ENCODE measurements at regions of chr6 and their contacts with region 1.

Region 1: GRCh38 chr6:53171605-53172446 is 23.2 kb upstream of the GCM1 start:
- DNase-seq: peak; percentile 83 to 94 (median 87)
- ATAC-seq: peak; percentile 64 to 97 (median 94)
- H3K4me3 ChIP-seq: no peak overlapping the region
- H3K27ac ChIP-seq: no peak overlapping the region
- H3K4me1 ChIP-seq: peaks cover 0 to 11% (median 1%) of the 10 kb centered on the region in 12 donors
- H3K27me3 ChIP-seq: no peaks in the 10 kb centered on the region
- CTCF ChIP-seq: peak; percentile 100
- POLR2A ChIP-seq: no peak

Region 2: GRCh38 chr6:53294095-53294494 is 122.3 kb after region 1 on chr6:
- intact Hi-C with region 1: loop called in 8 of 10 experiments (anchors 5 to 10 kb)
- DNase-seq: no peak
- ATAC-seq: peak in 1 of 4 donors; percentile 41
- H3K4me3 ChIP-seq: no peak overlapping the region
- H3K27ac ChIP-seq: no peak overlapping the region
- H3K4me1 ChIP-seq: peaks cover 0 to 53% (median 26%) of the 10 kb centered on the region in 12 donors
- H3K27me3 ChIP-seq: no peaks in the 10 kb centered on the region
- CTCF ChIP-seq: peak; percentile 37 to 65 (median 46)
- POLR2A ChIP-seq: no peak

Region 3: DNA sequence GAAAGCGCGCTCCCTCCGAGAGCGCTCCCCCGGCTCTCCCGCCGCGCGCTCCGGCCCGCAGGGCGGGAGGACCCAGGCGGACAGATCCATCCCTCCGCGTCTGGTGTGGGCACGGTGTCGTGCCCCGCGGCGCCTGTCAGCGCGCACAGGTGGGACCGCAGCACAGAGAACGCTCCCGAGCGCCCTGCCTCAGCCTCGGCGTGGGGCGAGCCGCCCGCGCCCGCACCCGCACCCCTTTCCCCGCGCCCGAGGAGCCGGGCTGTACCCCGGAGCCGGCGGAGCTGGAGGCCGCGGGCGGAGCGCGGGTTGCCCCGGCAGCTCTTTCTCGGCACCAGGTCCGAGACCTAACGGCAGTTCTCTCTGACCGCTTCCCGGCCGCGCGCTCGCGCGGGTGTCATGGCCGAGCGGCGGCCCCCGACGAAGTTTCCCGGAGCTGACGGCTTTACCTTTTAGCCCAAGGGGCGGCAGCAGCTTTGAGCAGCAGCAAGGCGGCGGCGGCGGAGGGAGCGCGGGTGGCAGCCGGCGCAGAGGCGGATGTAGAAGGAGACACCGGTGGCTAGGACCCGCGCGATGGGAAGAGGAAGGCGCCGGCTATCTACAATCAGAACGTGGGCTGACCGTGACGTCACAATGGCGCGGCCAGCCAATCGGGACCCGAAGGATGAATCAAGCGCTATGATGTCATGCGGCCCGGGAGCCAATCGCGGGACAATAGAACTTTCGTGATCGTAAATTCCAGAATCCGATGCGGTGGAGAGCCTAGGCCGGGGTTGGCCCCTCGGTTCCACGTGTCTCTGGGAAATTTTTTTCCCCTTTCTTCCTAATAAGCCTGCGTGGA is 176.8 kb after region 1 on chr6 and contains the start of gene ELOVL5:
- intact Hi-C with region 1: loop called in 3 of 10 experiments (anchors 2 to 5 kb)
- DNase-seq: peak; percentile 98 to 99 (median 99)
- ATAC-seq: peak; percentile 87 to 96 (median 94)
- H3K4me3 ChIP-seq: peak within 1 kb of the TSS; percentile 75 to 98 (median 90)
- H3K27ac ChIP-seq: peak within 1 kb of the TSS; percentile 89 to 100 (median 97)
- H3K4me1 ChIP-seq: peaks cover 3 to 42% (median 15%) of the 10 kb centered on the region in 12 donors
- H3K27me3 ChIP-seq: no peaks in the 10 kb centered on the region
- CTCF ChIP-seq: peak in 4 of 12 donors; percentile 7 to 14 (median 10)
- POLR2A ChIP-seq: peak; percentile 34 to 88
- total RNA-seq, gene ELOVL5: 17.3 to 47.9 (median 29.3) TPM

Region 4: GRCh38 chr6:53410508-53411258 is 238.9 kb after region 1 on chr6:
- intact Hi-C with region 1: loop called (anchors 1 to 5 kb)
- DNase-seq: peak; percentile 23 to 68 (median 39)
- ATAC-seq: peak; percentile 75 to 90 (median 84)
- H3K4me3 ChIP-seq: no peak overlapping the region
- H3K27ac ChIP-seq: no peak overlapping the region
- H3K4me1 ChIP-seq: peaks cover 0 to 5% (median 0%) of the 10 kb centered on the region in 12 donors
- H3K27me3 ChIP-seq: no peaks in the 10 kb centered on the region
- CTCF ChIP-seq: peak; percentile 52 to 82 (median 70)
- POLR2A ChIP-seq: no peak

Region 5: GRCh38 chr6:53651764-53652401 is 480.1 kb after region 1 on chr6:
- intact Hi-C with region 1: loop called in 1 of 10 experiments (anchors 10 kb)
- DNase-seq: peak; percentile 44 to 83 (median 57)
- ATAC-seq: peak; percentile 42 to 82 (median 78)
- H3K4me3 ChIP-seq: peak overlapping the region; percentile 21 to 66 (median 48)
- H3K27ac ChIP-seq: peak overlapping the region in 5 of 12 donors; percentile 6 to 39 (median 12)
- H3K4me1 ChIP-seq: peaks cover 0 to 62% (median 18%) of the 10 kb centered on the region in 12 donors
- H3K27me3 ChIP-seq: peaks cover 0 to 5% (median 0%) of the 10 kb centered on the region in 9 donors
- CTCF ChIP-seq: peak in 6 of 12 donors; percentile 6 to 35 (median 14)
- POLR2A ChIP-seq: no peak